ENCODE measurements at regions of chr10 and their contacts with region 1.

Region 1: DNA sequence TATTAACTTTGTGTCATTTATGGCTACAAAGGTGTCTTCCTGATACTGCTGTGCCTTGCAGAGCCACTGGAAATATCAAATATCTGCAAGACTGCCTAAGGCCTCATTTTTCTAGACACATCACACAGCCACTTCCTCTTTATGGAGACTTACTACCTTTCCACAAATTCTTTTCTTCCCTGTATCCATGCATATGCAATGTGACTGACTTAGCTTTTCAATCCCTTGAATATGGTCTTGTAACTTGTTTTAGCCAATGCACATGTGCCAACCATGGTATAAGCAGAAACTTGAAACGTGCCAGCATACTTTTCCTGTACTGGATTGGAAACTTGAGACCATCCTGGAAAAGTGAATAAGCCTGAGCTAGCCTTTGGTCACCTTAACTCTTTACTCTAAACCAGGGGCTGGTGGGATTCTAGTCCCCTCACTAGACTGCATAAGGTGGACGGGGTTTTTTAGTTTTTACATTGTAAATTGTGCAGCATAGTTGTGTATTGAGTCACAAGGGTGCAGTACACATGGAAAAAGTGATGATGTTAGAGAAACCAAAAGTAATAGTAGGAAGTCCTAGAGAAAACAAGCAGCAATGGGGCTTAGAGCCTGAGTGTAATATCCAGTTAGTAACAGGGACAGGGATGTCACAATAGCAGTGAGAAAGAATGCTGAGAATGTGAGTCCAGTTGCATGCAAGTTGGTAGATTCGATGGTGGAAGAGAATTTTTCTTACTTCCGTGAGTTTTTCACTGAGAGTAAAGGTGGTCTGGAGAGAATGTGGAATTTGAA is 879.5 kb downstream of the SORCS1 start:
- DNase-seq: no peak
- H3K4me3 ChIP-seq: no peak overlapping the region
- H3K27ac ChIP-seq: no peak overlapping the region
- H3K4me1 ChIP-seq: no peaks in the 10 kb centered on the region
- H3K27me3 ChIP-seq: no peaks in the 10 kb centered on the region
- CTCF ChIP-seq: no peak
- EP300 ChIP-seq: no peak
- POLR2A ChIP-seq: no peak

Region 2: GRCh38 chr10:106424076-106424475 is 139.1 kb after region 1 on chr10:
- intact Hi-C with region 1: loop called in 1 of 4 experiments (anchors 5 kb)
- DNase-seq: no peak
- H3K4me3 ChIP-seq: no peak overlapping the region
- H3K27ac ChIP-seq: no peak overlapping the region
- H3K4me1 ChIP-seq: no peaks in the 10 kb centered on the region
- H3K27me3 ChIP-seq: no peaks in the 10 kb centered on the region
- CTCF ChIP-seq: no peak
- EP300 ChIP-seq: no peak
- POLR2A ChIP-seq: no peak